Prostate gland (tissue), 2 donors: ENCODE measurements at regions of chr13 and their contacts with region 1.

Region 1: DNA sequence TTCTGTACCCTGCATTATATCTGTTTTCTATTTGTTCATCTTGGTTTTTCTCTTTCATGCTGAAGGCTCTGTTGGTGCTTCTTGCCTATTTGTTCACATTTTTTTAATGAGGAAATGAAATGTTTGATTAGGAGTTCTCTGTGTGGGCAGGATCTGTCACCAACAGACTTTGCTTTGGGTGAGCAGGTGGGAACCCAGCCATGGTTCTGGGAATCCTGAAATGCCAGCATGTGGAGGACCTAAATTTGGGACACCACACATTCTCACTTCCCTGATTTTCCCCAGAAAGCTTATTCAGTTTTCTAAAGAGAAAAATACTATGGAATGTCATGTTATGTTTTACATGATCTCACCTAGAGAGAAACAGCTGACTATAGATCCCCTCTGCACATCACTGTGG is 34.0 kb downstream of the TPT1 start:
- DNase-seq: no peak
- H3K4me3 ChIP-seq: no peak overlapping the region
- H3K27ac ChIP-seq: no peak overlapping the region
- H3K4me1 ChIP-seq: peaks cover 2% of the 10 kb centered on the region
- H3K27me3 ChIP-seq: no peaks in the 10 kb centered on the region
- CTCF ChIP-seq: no peak
- POLR2A ChIP-seq: no peak

Region 2: DNA sequence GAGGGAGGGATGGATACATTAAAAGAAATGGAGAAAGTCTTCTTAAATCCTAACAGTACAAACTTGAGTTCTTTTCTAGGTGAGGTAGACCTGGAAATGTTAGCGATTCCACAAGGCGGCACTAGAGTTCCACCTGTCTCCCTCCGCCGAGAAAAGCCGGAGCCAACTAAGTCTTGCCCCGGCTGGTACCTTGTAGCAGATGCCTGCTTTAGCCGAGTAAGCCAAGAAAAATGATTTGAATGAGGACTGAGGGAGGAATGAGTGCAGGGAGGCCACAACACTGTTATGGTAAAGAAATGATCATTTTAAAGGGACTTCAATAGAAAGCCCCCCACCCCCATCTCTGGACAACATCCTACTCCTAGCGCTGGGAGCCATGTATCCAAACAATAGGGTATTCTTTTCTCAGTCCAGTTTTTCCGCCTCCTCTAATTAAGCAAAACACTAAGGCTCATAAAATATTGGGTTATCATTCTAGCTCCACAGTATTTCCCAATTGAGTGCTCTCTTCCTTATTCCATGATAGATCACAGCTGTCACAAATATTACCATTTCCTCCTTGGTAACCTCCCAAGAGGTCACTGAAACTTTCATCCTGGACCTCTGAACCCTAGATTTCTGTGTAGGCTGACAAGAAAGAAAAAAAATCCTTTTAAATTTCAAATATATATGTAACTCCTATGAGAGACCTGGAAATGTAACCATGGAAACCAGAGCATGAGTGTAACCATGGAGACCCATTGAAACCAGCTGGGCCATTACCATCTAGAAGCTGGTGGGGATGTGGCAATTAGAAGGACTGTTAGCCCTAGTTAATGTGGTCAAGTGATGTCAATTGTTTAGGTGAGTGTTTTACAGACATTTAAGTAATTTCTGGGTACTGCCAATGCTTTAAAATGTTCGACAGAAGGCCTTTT is 259.3 kb before region 1 on chr13:
- intact Hi-C with region 1: loop called (anchors 5 kb)
- DNase-seq: peak; percentile 83
- H3K4me3 ChIP-seq: peak overlapping the region; percentile 19 to 33
- H3K27ac ChIP-seq: no peak overlapping the region
- H3K4me1 ChIP-seq: no peaks in the 10 kb centered on the region
- H3K27me3 ChIP-seq: no peaks in the 10 kb centered on the region
- CTCF ChIP-seq: peak; percentile 64 to 94 (median 88)
- POLR2A ChIP-seq: no peak

Region 3: DNA sequence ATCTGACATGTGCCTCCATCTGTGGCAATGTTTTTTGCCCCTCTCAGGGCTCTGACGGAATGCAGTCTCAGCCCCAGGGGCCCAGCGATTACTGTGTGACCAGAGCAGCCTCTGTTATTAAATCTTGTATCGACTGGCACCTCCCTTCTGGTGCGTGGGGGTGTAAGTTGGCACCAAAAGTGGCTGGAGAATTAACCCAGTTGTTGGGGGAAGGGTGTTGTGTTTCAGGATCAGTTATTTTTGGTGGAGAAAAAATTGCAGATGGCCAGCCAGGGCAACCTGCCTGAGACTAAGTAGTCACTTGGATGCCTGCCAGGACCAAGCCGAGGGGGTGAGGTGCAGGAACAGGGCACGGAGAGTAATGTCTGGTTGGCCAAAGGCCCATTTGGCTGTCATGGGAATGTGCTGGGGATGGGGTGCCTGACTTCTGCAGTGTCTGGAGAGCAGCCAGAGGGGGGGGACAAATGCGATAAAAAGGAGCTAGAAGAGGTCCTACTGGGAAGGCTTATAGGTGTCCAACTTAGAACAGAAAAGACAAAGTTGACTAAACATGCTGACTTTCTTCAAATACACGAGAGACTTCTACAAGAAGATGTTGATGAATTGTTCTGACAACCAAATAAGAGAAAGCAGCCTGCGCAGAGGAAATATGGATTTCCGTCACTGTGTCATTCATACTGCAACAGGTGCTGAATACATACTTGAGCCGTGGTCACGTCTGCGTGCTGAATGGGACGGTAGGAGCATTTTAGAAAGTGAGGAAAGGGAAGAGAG is 474.8 kb after region 1 on chr13:
- intact Hi-C with region 1: no loop called
- DNase-seq: no peak
- H3K4me3 ChIP-seq: no peak overlapping the region
- H3K27ac ChIP-seq: no peak overlapping the region
- H3K4me1 ChIP-seq: no peaks in the 10 kb centered on the region
- H3K27me3 ChIP-seq: no peaks in the 10 kb centered on the region
- CTCF ChIP-seq: no peak
- POLR2A ChIP-seq: no peak